ENCODE measurements at regions of chr1 and their contacts with region 1.

Region 1: DNA sequence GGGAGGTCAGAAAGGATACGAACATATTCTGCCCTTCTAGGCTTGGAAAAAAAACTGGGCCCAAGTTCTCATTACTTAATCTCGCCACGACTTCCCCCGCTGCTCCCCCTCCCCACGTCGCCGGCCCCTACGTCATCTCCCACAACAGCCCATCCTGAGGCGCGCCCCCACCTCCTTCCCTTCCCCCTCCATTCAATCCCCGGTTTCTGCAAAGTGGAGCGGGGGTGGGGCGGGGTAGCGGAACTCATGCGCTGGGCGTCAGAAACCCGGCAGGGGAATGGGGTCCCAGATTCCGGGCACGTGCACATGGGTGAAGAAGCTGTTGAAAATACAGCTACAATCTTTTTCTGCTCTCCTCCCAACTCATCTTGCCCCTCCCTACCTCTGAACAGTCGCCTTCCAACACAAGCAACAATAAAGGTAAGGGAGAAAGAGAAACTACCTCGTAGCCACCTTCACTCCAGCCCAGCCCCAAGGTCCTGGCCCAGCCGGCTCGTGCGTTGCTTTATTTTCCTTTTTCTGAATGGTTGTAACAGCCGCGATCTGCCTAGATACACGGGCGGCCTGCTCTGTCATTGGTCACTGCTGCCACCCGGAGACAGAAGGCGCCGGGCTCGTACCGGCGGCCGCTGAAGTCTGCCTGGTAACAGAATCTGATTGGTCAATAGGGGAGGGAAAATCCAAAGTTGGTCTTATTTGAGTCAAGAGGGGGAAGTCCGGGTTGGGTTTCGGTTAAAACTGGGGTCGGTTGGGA is at the start of gene RFX5:
- DNase-seq: peak; percentile 99
- H3K4me3 ChIP-seq: peak within 1 kb of the TSS; percentile 4 to 49 (median 48)
- H3K27ac ChIP-seq: peak within 1 kb of the TSS; percentile 71
- H3K4me1 ChIP-seq: peaks cover 11% of the 10 kb centered on the region
- H3K27me3 ChIP-seq: no peaks in the 10 kb centered on the region
- CTCF ChIP-seq: no peak
- POLR2A ChIP-seq: no peak
- total RNA-seq, gene RFX5: 46.3 and 52.8 TPM in 2 replicates

Region 2: GRCh38 chr1:151106894-151107293 is 240.1 kb before region 1 on chr1:
- CTCF ChIA-PET with region 1: no interaction called
- POLR2A ChIA-PET with region 1: no interaction called
- dilution Hi-C with region 1: no loop called
- intact Hi-C with region 1: loop called (anchors 10 kb)
- DNase-seq: peak; percentile 73
- H3K4me3 ChIP-seq: no peak overlapping the region
- H3K27ac ChIP-seq: peak overlapping the region; percentile 38
- H3K4me1 ChIP-seq: peaks cover 10% of the 10 kb centered on the region
- H3K27me3 ChIP-seq: no peaks in the 10 kb centered on the region
- CTCF ChIP-seq: no peak
- POLR2A ChIP-seq: no peak

Region 3: DNA sequence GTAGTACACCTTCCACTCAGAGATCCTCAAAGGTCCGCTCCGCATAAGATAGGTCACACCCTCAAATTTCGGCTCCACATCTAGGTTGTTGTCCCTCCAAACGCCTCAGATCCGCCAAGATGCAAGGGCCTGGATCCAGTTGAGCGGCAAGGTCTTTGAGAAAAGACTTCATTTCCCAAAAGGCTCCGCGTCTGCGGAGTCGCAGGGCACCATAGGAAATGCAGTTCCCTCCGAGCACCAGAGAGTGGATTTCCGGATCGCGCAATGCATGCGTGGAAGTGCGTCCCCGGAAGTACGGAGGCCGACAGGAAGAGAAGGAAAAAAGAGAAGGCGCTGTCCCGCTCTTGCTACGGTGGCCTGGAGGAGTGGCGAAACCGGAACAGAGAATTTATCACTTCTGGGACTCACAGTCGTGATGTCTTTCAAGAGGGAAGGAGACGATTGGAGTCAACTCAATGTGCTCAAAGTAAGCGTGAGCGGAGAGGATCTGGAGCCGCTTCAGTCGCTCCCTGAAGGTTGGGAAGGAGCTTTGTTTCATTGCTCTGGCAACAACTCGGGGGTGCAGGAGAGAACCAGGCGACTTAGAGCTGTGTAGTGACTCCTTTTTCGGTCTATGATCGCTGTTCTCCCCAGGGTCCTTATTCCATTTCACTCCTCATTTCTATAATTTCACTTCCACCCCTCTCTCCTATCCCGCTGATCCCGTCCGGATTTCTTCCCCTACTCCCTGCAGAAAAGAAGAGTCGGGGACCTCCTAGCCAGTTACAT is 181.0 kb before region 1 on chr1 and contains the starts of genes LYSMD1 and SCNM1:
- CTCF ChIA-PET with region 1: no interaction called
- POLR2A ChIA-PET with region 1: no interaction called
- dilution Hi-C with region 1: no loop called
- intact Hi-C with region 1: no loop called
- DNase-seq: peak; percentile 98
- H3K4me3 ChIP-seq: peak within 1 kb of the TSS; percentile 65 to 89 (median 81)
- H3K27ac ChIP-seq: peak within 1 kb of the TSS; percentile 65
- H3K4me1 ChIP-seq: peaks cover 19% of the 10 kb centered on the region
- H3K27me3 ChIP-seq: no peaks in the 10 kb centered on the region
- CTCF ChIP-seq: no peak
- POLR2A ChIP-seq: peak; percentile 69
- total RNA-seq, gene LYSMD1: 6.4 and 8.2 TPM in 2 replicates
- total RNA-seq, gene SCNM1: 43.1 and 49.0 TPM in 2 replicates

Region 4: GRCh38 chr1:151281969-151282882 is 64.7 kb before region 1 on chr1 and contains the start of gene ZNF687:
- CTCF ChIA-PET with region 1: interaction called, 3 read pairs
- POLR2A ChIA-PET with region 1: no interaction called
- dilution Hi-C with region 1: no loop called
- intact Hi-C with region 1: loop called (anchors 1 kb)
- DNase-seq: peak; percentile 100
- H3K4me3 ChIP-seq: peak within 1 kb of the TSS; percentile 66 to 89 (median 69)
- H3K27ac ChIP-seq: peak within 1 kb of the TSS; percentile 81
- H3K4me1 ChIP-seq: peaks cover 9% of the 10 kb centered on the region
- H3K27me3 ChIP-seq: peaks cover 0 to 2% of the 10 kb centered on the region in 2 experiments
- CTCF ChIP-seq: no peak
- POLR2A ChIP-seq: peak; percentile 76
- total RNA-seq, gene ZNF687: 15.5 and 17.9 TPM in 2 replicates

Region 5: DNA sequence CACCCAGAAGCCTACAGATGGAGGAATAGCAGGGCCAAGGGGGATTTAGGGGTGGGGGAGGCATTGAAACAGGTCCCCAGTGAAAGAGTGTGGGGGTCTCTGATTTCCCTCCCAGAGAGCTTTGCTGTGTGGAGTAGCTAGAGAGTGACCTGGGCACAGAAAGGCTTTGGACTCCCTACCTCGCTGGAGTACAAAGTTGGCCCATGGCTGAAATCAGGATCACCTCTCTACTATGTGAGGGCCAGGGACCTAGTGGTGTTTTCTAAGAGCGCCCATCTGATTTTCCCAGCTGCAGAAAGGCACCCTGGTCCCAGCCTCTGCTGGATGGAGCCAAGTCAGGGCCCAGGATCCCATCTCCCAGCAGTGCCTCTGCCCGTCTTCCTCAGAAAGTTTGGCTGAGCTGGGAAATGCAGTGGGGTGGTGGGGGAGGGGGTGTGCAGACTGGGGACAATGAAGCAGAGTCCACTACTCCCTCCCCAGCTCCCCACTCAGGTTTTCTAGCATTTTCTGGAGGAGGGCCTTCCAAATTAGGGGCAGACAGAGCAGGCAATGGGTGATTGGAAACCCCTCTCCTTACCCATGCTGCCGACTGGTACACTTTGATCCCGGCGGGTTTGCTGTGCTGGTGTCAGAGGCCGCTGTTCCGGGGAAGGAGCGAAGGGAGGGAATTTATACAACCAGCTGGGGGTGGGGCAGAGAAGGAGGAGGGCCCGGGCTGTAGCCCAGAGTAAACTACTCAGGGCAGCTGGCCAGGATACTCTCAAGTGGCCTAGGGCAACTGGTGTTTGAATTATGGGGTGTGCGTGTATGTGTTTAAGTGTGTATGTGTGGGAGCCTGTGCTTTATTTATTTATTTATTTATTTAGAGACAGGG is 25.4 kb after region 1 on chr1 and contains the start of gene SELENBP1:
- CTCF ChIA-PET with region 1: no interaction called
- POLR2A ChIA-PET with region 1: no interaction called
- dilution Hi-C with region 1: no loop called
- intact Hi-C with region 1: loop called (anchors 1 kb)
- DNase-seq: peak; percentile 64
- H3K4me3 ChIP-seq: peak within 1 kb of the TSS in 1 of 3 experiments; percentile 29
- H3K27ac ChIP-seq: no peak within 1 kb of the TSS
- H3K4me1 ChIP-seq: peaks cover 8% of the 10 kb centered on the region
- H3K27me3 ChIP-seq: no peaks in the 10 kb centered on the region
- CTCF ChIP-seq: no peak
- POLR2A ChIP-seq: peak; percentile 52
- total RNA-seq, gene SELENBP1: 12.4 and 18.0 TPM in 2 replicates

Region 6: DNA sequence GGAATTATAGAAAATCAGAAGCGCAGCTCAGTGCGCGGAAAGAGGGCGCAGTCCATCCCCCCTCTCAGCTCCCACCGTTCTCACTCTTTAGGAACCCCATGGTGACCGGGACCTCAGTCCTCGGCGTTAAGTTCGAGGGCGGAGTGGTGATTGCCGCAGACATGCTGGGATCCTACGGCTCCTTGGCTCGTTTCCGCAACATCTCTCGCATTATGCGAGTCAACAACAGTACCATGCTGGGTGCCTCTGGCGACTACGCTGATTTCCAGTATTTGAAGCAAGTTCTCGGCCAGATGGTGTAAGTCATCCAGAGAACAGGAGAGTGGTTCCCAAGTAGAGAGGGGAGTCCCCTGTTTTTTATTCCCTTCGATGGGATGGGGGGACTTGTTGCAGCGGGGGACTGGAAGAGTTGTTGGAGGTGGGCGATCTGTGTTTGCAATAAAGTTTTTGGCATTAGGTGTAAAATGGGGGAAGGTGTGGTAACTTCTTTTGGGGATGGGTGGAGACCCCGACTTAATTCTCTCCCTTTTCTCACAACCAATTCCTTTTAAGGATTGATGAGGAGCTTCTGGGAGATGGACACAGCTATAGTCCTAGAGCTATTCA is 53.0 kb after region 1 on chr1:
- CTCF ChIA-PET with region 1: no interaction called
- POLR2A ChIA-PET with region 1: no interaction called
- dilution Hi-C with region 1: no loop called
- intact Hi-C with region 1: loop called (anchors 1 kb)
- DNase-seq: no peak
- H3K4me3 ChIP-seq: peak overlapping the region; percentile 52 to 66 (median 57)
- H3K27ac ChIP-seq: peak overlapping the region; percentile 79
- H3K4me1 ChIP-seq: peaks cover 6% of the 10 kb centered on the region
- H3K27me3 ChIP-seq: no peaks in the 10 kb centered on the region
- CTCF ChIP-seq: no peak
- POLR2A ChIP-seq: no peak

Region 7: GRCh38 chr1:151455231-151455630 is 108.3 kb after region 1 on chr1:
- CTCF ChIA-PET with region 1: no interaction called
- POLR2A ChIA-PET with region 1: no interaction called
- dilution Hi-C with region 1: no loop called
- intact Hi-C with region 1: no loop called
- DNase-seq: no peak
- H3K4me3 ChIP-seq: no peak overlapping the region
- H3K27ac ChIP-seq: no peak overlapping the region
- H3K4me1 ChIP-seq: peaks cover 9% of the 10 kb centered on the region
- H3K27me3 ChIP-seq: no peaks in the 10 kb centered on the region
- CTCF ChIP-seq: no peak
- POLR2A ChIP-seq: no peak

Measured in endothelial cell of umbilical vein (primary cell).